Activated CD8-positive, alpha-beta memory T cell treated with anti-CD3 and anti-CD28 coated beads, Interleukin-2, amount 10 ng/mL, durations not matched to agents 7 days and 5 days (primary cell): ENCODE measurements at regions of chr2 and their contacts with region 1.

Region 1: GRCh38 chr2:20411361-20411894 is 35.4 kb upstream of the RHOB start:
- DNase-seq: peak; percentile 82
- ATAC-seq: peak; percentile 93
- H3K4me3 Mint-ChIP-seq: no peak overlapping the region
- H3K27ac Mint-ChIP-seq: no peak overlapping the region
- H3K4me1 Mint-ChIP-seq: no peaks in the 10 kb centered on the region
- H3K27me3 Mint-ChIP-seq: peaks cover 39% of the 10 kb centered on the region

Region 2: DNA sequence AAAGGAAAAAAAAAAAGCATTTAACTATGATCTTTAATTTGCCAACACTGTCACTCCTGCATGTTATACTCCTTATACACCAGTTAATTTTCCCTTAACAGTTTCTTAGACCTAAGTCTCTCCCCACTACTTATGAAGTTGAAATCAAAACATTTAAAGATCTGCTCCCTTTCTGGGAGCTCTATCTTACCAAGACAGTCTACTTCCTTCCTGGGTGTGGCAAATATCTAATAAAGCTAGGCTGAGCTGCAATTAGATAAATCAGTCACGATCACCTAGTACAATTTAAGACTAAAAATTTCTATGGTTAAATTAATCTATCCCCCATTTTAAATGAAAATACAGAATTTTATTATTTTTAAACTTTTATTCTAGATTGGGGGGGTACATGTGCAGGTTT is 94.2 kb before region 1 on chr2:
- CTCF ChIA-PET with region 1: no interaction called
- DNase-seq: no peak
- ATAC-seq: no peak
- H3K4me3 Mint-ChIP-seq: no peak overlapping the region
- H3K27ac Mint-ChIP-seq: peak overlapping the region; percentile 35
- H3K4me1 Mint-ChIP-seq: peaks cover 30% of the 10 kb centered on the region
- H3K27me3 Mint-ChIP-seq: no peaks in the 10 kb centered on the region

Region 3: DNA sequence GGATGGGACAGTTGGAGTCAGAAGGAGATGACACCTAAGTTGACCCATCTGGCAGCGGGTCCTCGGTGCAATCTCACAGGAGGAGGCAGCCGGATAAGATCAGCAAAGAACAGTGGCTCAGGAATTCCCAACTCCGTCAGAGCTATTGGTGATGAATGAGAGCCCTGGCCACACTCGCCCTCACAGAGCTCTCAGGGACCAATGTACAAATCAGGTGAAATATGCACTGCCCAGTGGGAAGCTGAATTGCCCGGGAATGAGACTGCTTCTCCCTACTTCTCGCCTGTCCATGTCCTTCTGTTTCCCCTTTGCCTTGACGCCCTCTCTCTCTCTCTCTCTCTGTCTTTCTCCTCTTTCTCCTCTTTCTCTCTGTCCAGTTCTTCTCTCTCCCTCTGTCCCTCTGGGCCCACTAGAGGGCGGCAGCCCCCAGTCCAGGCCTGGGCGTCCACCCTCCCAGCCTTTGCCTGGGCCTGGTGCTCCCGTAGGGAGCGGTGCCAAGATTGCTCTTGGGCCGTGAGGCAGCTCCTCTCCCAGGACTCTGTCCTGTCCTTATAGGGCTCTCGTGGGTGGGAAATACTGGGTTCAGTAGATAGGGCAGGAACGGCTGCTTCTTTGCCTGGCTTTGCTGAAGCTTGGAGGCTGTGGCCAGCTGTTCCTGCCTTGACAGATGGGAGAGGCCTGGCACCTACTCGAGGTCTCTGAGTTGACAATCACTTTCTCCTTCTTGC is 32.5 kb before region 1 on chr2:
- CTCF ChIA-PET with region 1: interaction called, 17 read pairs
- DNase-seq: no peak
- ATAC-seq: peak; percentile 36
- H3K4me3 Mint-ChIP-seq: no peak overlapping the region
- H3K27ac Mint-ChIP-seq: no peak overlapping the region
- H3K4me1 Mint-ChIP-seq: peaks cover 8% of the 10 kb centered on the region
- H3K27me3 Mint-ChIP-seq: peaks cover 16% of the 10 kb centered on the region

Region 4: DNA sequence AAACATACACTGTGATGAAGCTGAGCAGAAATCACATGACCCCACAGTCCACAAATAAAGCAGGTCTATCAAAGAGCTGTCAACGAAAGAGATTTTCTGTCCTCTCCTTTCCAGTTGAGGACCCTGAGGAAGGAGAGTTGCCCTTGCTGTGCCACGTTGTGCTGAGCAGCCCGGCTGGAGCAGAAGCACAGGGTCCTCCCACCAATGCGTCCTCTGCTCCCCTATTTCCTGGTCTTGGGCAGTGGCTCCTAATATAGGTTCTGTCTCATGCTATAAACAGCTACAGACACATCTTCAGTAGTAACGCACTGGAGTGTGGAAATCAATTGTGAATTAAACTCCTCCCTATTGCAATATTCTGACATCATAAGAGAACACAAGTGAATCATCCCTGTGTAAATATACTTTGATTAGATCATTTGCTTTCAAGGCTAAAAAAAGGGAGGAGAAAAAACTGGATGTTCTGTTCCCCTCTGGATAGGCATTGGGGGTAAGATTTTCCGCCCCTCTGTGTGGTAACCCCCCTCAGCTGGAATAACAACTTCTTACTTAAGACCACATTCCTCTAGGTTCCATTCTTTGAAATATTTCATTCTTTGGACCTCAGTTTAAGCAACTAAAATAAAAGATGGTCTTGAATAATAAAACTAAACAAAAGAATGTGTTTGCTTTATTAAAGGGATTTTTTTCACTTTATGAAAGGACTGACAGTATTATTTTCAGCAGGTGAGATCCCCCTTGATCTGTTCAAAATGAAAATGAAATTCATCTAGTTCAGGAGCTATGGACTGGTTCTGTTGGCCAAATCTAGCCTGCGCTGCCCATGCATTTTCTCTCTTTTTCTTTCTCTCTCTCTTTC is 27.1 kb after region 1 on chr2:
- CTCF ChIA-PET with region 1: interaction called, 13 read pairs
- DNase-seq: peak; percentile 31
- ATAC-seq: no peak
- H3K4me3 Mint-ChIP-seq: no peak overlapping the region
- H3K27ac Mint-ChIP-seq: no peak overlapping the region
- H3K4me1 Mint-ChIP-seq: peaks cover 4% of the 10 kb centered on the region
- H3K27me3 Mint-ChIP-seq: peaks cover 53% of the 10 kb centered on the region

Region 5: DNA sequence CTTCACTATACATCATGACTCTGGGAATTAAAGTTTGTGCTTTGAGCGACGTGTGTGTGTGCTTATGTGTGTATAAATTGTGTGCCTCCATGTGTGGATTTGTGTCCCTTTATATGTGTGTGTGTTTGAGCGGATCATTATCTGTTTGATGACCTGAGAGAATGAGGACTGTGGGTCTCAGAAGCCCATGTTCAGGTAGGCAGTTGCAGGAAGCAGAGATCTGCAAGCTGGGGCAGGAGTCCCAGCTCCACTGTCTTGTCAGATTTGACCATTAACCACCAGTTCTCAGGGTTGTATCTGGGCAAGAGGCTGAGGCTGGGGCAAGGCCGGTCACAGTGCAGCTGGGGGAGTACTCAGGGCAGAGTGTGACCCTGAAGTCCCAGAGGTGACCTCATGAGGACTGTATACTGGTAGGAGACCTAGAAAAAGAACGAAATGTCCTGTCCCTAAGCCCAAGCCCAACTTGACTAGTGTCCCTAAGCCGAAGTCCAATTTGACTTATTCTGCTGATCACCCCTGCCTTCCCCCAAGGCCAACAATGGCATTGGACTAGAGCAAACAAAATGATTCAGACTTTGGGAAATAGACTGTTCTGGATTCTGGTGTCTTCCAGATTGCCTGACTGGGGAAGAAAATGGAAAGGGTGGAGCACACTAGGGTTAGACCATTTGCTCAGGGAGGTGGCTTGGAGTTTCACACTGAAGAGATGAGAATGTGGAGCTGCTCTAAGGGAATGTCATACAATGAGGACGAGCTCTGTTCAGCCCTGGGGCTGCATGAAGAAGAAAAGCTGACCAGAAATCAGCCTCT is 63.5 kb after region 1 on chr2:
- CTCF ChIA-PET with region 1: no interaction called
- DNase-seq: no peak
- ATAC-seq: no peak
- H3K4me3 Mint-ChIP-seq: no peak overlapping the region
- H3K27ac Mint-ChIP-seq: no peak overlapping the region
- H3K4me1 Mint-ChIP-seq: no peaks in the 10 kb centered on the region
- H3K27me3 Mint-ChIP-seq: peaks cover 5% of the 10 kb centered on the region

Region 6: GRCh38 chr2:20516646-20517341 is 105.4 kb after region 1 on chr2:
- CTCF ChIA-PET with region 1: no interaction called
- DNase-seq: no peak
- ATAC-seq: peak; percentile 75
- H3K4me3 Mint-ChIP-seq: no peak overlapping the region
- H3K27ac Mint-ChIP-seq: peak overlapping the region; percentile 78
- H3K4me1 Mint-ChIP-seq: peaks cover 21% of the 10 kb centered on the region
- H3K27me3 Mint-ChIP-seq: peaks cover 11% of the 10 kb centered on the region

Region 7: DNA sequence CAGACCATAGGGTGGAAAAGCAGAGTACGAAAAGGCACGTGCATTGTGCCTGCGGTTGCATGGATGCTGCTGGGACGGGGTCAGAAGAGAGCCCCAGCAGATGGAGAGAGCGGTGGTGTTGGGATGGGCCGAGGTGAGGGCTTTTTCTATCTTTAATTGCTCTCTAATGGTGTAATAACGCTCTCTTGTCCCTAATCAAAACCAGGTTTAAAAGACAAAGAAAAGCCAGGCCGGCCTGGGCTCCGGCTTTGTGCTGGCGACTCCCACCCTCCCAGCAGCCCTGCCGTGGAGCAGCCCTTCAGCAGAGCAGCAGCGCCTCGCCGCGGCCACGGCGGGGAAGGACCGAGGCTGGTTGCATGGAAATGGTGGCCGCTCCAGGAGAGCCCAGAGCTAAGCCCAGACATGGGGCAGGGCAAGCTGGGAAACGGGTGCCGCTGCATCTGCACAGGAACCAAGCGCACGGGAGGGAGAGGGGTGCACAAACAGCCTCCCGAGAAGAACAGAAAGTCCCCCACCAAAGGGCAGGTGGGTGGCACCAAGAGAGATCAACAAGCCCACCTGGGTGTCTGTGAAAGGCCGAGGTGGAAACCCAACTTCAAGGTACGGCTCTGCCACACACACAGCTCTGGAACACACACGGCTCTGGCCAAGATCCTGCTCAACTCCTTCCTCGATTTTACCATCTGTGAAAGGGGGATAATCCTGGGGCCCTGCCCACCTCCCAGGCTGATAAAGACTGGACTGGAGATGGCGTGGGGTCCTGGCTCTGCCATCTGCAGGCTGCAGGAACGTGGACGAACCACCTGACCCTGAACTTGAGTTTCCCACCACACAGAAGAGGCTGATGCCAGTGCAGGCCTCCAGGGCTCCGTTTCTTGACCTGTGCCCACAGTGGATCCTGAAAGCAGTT is 224.5 kb after region 1 on chr2:
- CTCF ChIA-PET with region 1: interaction called, 11 read pairs
- DNase-seq: peak; percentile 71
- ATAC-seq: peak; percentile 86
- H3K4me3 Mint-ChIP-seq: no peak overlapping the region
- H3K27ac Mint-ChIP-seq: no peak overlapping the region
- H3K4me1 Mint-ChIP-seq: peaks cover 8% of the 10 kb centered on the region
- H3K27me3 Mint-ChIP-seq: no peaks in the 10 kb centered on the region

Region 8: DNA sequence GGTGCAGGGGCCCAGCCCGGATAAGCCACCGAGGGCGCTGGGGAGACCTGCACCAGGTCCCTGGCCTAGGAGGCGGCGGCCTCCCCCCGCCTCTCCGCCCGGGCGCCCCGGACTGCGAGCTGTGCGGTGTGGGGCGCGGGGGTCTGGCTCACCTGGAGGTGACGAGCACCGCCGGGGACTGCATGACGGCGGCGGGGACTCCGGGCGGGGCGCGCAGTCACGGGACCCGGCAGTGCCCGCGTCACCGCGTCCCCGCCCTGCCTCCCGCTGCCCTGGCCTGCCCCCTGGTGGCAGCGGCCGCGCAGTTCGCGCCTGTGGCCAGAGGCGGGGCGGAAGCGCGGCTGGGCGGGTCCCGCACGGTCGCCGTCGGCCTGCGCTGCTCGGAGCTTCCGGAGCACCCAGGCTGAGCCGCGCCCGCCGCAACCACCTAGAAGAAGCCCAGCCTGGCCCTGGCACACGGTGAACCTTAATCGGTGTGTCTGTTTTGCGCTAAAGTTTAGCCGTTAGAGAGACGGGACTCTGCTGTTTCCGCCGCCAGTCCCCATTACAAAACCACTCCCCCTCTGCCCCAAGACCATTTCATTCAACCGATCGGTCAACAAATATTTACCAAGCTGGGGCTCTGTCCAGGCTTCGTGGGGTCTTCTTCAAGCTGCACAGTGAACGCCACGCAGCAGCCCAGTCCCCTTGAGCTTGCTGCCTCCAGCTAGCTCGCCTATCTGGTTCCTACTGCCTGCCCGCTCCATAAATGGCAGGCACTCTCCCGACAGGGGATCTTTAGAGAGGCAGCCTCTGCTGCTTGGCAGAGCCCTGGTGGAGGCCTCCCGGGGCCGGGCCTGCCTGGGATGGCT is 239.7 kb after region 1 on chr2 and contains the start of gene HS1BP3:
- CTCF ChIA-PET with region 1: interaction called, 17 read pairs
- DNase-seq: peak; percentile 88
- ATAC-seq: peak; percentile 96
- H3K4me3 Mint-ChIP-seq: peak within 1 kb of the TSS; percentile 83
- H3K27ac Mint-ChIP-seq: peak within 1 kb of the TSS; percentile 87
- H3K4me1 Mint-ChIP-seq: peaks cover 19% of the 10 kb centered on the region
- H3K27me3 Mint-ChIP-seq: peaks cover 12% of the 10 kb centered on the region
- total RNA-seq, gene HS1BP3: 12.8 to 12.9 TPM

Region 9: DNA sequence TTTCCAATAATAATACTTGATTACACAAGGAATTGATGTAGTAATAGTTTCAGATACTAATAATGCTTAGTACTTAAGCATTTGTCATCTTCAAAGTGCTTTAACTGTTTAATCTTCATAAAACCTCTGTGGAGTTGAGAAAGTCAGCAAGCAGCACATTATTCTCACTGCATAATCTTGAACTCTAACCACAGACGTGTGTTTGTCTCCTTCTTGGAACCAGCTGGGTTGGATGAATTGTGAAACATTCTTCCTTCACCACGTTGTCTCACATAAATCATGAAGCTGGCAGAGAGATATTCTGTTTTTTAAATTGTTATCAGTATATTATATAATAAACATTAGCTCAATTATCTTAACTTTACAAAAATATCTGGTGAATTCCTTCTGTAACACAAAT is 466.5 kb after region 1 on chr2:
- CTCF ChIA-PET with region 1: no interaction called
- DNase-seq: no peak
- ATAC-seq: no peak
- H3K4me3 Mint-ChIP-seq: no peak overlapping the region
- H3K27ac Mint-ChIP-seq: no peak overlapping the region
- H3K4me1 Mint-ChIP-seq: no peaks in the 10 kb centered on the region
- H3K27me3 Mint-ChIP-seq: peaks cover 33% of the 10 kb centered on the region